ENCODE measurements at regions of chr6 and their contacts with region 1.

Region 1: GRCh38 chr6:33592411-33593054 is 12.5 kb upstream of the BAK1 start:
- DNase-seq: peak in 1 of 2 experiments; percentile 87
- H3K4me3 ChIP-seq: peak overlapping the region in 2 of 4 experiments; percentile 26 to 53; a peak in 4 of 8 replicates
- H3K27ac ChIP-seq: no peak overlapping the region
- H3K4me1 ChIP-seq: peaks cover 5 to 28% (median 17%) of the 10 kb centered on the region in 4 experiments
- H3K27me3 ChIP-seq: no peaks in the 10 kb centered on the region
- CTCF ChIP-seq: no peak
- EP300 ChIP-seq: no peak
- POLR2A ChIP-seq: no peak
- RAD21 ChIP-seq: no peak

Region 2: DNA sequence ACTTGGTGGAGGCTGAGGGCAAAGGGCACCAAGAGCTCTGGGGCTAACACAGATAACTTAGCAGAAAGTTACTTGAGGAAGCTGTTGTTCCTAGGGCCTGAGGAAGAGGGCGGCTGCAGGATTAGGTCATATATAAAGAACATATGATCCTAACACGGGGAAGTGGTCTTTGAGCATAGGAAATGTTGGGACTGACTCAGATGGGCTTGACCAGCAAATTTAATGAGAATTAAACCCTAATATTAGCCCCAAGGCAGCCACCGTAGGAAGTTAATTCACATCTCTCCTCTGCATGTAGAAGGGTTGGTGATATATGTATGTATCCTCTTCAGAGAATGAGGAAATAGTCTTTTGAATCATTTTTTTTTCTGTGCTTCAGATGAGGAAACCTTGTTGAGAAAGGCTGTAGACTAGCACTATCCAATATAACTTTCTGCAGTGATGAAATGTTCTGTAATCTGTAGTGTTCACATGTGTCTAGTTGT is 147.4 kb before region 1 on chr6:
- CTCF ChIA-PET with region 1: no interaction called
- POLR2A ChIA-PET with region 1: no interaction called
- DNase-seq: no peak
- H3K4me3 ChIP-seq: no peak overlapping the region
- H3K27ac ChIP-seq: no peak overlapping the region
- H3K4me1 ChIP-seq: no peaks in the 10 kb centered on the region
- H3K27me3 ChIP-seq: no peaks in the 10 kb centered on the region
- CTCF ChIP-seq: no peak
- EP300 ChIP-seq: no peak
- POLR2A ChIP-seq: no peak
- RAD21 ChIP-seq: no peak

Region 3: GRCh38 chr6:33628401-33628964 is 36.0 kb after region 1 on chr6:
- CTCF ChIA-PET with region 1: interaction called, 94 read pairs
- POLR2A ChIA-PET with region 1: interaction called, 7 read pairs
- DNase-seq: no peak
- H3K4me3 ChIP-seq: no peak overlapping the region
- H3K27ac ChIP-seq: 0 out of 2 replicates have a peak overlapping the region, but pooled peaks have one; percentile 35
- H3K4me1 ChIP-seq: peaks cover 0 to 23% (median 12%) of the 10 kb centered on the region in 4 experiments; a peak in 6 of 7 replicates
- H3K27me3 ChIP-seq: no peaks in the 10 kb centered on the region
- CTCF ChIP-seq: no peak
- EP300 ChIP-seq: no peak
- POLR2A ChIP-seq: no peak
- RAD21 ChIP-seq: no peak